Natural killer cell (primary cell): ENCODE measurements at regions of chr15 and their contacts with region 1.

Region 1: GRCh38 chr15:79582650-79583049 is 150.5 kb downstream of the MINAR1 start:
- DNase-seq: no peak
- ATAC-seq: no peak
- H3K4me3 ChIP-seq: no peak overlapping the region
- H3K4me3 Mint-ChIP-seq: no peak overlapping the region
- H3K27ac ChIP-seq: no peak overlapping the region
- H3K27ac Mint-ChIP-seq: no peak overlapping the region
- H3K4me1 ChIP-seq: no peaks in the 10 kb centered on the region
- H3K4me1 Mint-ChIP-seq: no peaks in the 10 kb centered on the region
- H3K27me3 ChIP-seq: peaks cover 8% of the 10 kb centered on the region
- H3K27me3 Mint-ChIP-seq: peaks cover 29 to 45% of the 10 kb centered on the region in 2 donors
- CTCF ChIP-seq: no peak

Region 2: GRCh38 chr15:79640206-79640605 is 57.6 kb after region 1 on chr15:
- intact Hi-C with region 1: loop called (anchors 10 kb)
- DNase-seq: no peak
- ATAC-seq: no peak
- H3K4me3 ChIP-seq: no peak overlapping the region
- H3K4me3 Mint-ChIP-seq: no peak overlapping the region
- H3K27ac ChIP-seq: no peak overlapping the region
- H3K27ac Mint-ChIP-seq: no peak overlapping the region
- H3K4me1 ChIP-seq: no peaks in the 10 kb centered on the region
- H3K4me1 Mint-ChIP-seq: no peaks in the 10 kb centered on the region
- H3K27me3 ChIP-seq: no peaks in the 10 kb centered on the region
- H3K27me3 Mint-ChIP-seq: peaks cover 14 to 28% of the 10 kb centered on the region in 2 donors
- CTCF ChIP-seq: no peak